ENCODE measurements at regions of chr6 and their contacts with region 1.

Region 1: DNA sequence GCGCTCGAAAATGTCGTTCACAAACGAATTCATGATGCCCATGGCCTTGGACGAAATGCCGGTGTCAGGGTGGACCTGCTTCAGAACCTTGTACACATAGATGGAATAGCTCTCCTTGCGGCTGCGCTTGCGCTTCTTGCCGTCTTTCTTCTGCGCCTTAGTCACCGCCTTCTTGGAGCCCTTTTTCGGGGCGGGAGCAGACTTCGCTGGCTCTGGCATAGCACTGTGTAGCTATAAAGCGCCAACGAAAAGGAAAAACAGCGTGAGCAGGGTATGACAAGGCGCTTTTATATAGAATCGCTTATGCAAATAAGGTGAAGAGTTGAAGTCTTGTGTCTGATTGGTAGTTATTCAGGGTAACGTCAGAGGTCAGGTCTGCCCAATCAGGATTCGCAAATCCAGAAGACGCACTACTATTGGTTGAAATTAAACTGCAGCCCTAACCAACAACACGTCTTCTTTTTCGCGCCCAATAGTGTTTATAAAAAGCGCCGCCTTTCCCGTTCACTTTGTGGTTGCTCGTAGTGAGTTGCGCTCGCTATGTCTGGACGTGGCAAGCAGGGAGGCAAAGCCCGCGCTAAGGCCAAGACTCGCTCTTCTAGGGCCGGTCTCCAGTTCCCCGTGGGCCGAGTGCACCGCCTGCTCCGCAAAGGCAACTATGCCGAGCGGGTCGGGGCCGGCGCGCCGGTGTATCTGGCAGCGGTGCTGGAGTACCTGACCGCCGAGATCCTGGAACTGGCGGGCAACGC is 114.8 kb upstream of the PRSS16 start:
- DNase-seq: peak; percentile 93
- ATAC-seq: peak; percentile 82
- H3K4me3 Mint-ChIP-seq: no peak overlapping the region
- H3K27ac Mint-ChIP-seq: no peak overlapping the region
- H3K4me1 Mint-ChIP-seq: peaks cover 18% of the 10 kb centered on the region
- H3K27me3 Mint-ChIP-seq: no peaks in the 10 kb centered on the region
- CTCF ChIP-seq: no peak

Region 2: GRCh38 chr6:26196846-26197648 is 935.7 kb before region 1 on chr6:
- CTCF ChIA-PET with region 1: no interaction called
- POLR2A ChIA-PET with region 1: interaction called, 42 read pairs
- intact Hi-C with region 1: loop called (anchors 2 kb)
- DNase-seq: peak; percentile 86
- ATAC-seq: peak; percentile 48
- H3K4me3 Mint-ChIP-seq: peak overlapping the region; percentile 96
- H3K27ac Mint-ChIP-seq: peak overlapping the region; percentile 96
- H3K4me1 Mint-ChIP-seq: peaks cover 24% of the 10 kb centered on the region
- H3K27me3 Mint-ChIP-seq: no peaks in the 10 kb centered on the region
- CTCF ChIP-seq: no peak

Region 3: GRCh38 chr6:26249957-26250697 is 882.6 kb before region 1 on chr6:
- CTCF ChIA-PET with region 1: interaction called, 5 read pairs
- POLR2A ChIA-PET with region 1: interaction called, 18 read pairs
- intact Hi-C with region 1: no loop called
- DNase-seq: peak; percentile 84
- ATAC-seq: peak; percentile 68
- H3K4me3 Mint-ChIP-seq: peak overlapping the region; percentile 82
- H3K27ac Mint-ChIP-seq: peak overlapping the region; percentile 99
- H3K4me1 Mint-ChIP-seq: peaks cover 27% of the 10 kb centered on the region
- H3K27me3 Mint-ChIP-seq: no peaks in the 10 kb centered on the region
- CTCF ChIP-seq: peak; percentile 43

Region 4: DNA sequence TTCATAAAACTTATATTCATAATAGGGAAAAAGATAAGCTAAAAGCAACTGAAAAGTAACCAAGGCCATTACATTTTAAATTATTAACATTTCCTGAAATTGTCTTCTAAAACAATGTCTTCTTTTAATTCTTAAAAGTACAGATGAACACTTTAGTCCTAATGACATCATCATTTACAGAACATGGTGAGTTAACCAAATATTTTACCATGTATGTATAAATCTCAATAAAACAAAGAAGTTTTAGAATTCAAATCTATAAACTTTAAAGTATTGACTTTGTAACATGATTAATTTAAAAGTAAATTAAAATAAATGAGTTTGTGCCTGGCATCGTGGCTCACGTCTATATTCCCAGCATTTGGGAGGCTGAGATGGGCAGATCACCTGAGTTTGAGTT is 11.1 kb before region 1 on chr6:
- CTCF ChIA-PET with region 1: interaction called, 9 read pairs
- POLR2A ChIA-PET with region 1: interaction called, 19 read pairs
- intact Hi-C with region 1: no loop called
- DNase-seq: no peak
- ATAC-seq: no peak
- H3K4me3 Mint-ChIP-seq: no peak overlapping the region
- H3K27ac Mint-ChIP-seq: no peak overlapping the region
- H3K4me1 Mint-ChIP-seq: peaks cover 12% of the 10 kb centered on the region
- H3K27me3 Mint-ChIP-seq: no peaks in the 10 kb centered on the region
- CTCF ChIP-seq: no peak

Region 5: GRCh38 chr6:27825025-27825793 is 692.5 kb after region 1 on chr6:
- CTCF ChIA-PET with region 1: no interaction called
- POLR2A ChIA-PET with region 1: interaction called, 11 read pairs
- intact Hi-C with region 1: no loop called
- DNase-seq: no peak
- ATAC-seq: peak; percentile 1
- H3K4me3 Mint-ChIP-seq: peak overlapping the region; percentile 91
- H3K27ac Mint-ChIP-seq: peak overlapping the region; percentile 99
- H3K4me1 Mint-ChIP-seq: peaks cover 25% of the 10 kb centered on the region
- H3K27me3 Mint-ChIP-seq: no peaks in the 10 kb centered on the region
- CTCF ChIP-seq: no peak

Region 6: GRCh38 chr6:27871924-27872638 is 739.4 kb after region 1 on chr6:
- CTCF ChIA-PET with region 1: no interaction called
- POLR2A ChIA-PET with region 1: interaction called, 59 read pairs
- intact Hi-C with region 1: no loop called
- DNase-seq: peak; percentile 85
- ATAC-seq: peak; percentile 61
- H3K4me3 Mint-ChIP-seq: peak overlapping the region; percentile 93
- H3K27ac Mint-ChIP-seq: peak overlapping the region; percentile 99
- H3K4me1 Mint-ChIP-seq: peaks cover 26% of the 10 kb centered on the region
- H3K27me3 Mint-ChIP-seq: no peaks in the 10 kb centered on the region
- CTCF ChIP-seq: peak; percentile 27

Measured in activated CD8-positive, alpha-beta T cell treated with anti-CD3 and anti-CD28 coated beads for 36 hours (primary cell).